ENCODE measurements at regions of chr21 and their contacts with region 1.

Region 1: DNA sequence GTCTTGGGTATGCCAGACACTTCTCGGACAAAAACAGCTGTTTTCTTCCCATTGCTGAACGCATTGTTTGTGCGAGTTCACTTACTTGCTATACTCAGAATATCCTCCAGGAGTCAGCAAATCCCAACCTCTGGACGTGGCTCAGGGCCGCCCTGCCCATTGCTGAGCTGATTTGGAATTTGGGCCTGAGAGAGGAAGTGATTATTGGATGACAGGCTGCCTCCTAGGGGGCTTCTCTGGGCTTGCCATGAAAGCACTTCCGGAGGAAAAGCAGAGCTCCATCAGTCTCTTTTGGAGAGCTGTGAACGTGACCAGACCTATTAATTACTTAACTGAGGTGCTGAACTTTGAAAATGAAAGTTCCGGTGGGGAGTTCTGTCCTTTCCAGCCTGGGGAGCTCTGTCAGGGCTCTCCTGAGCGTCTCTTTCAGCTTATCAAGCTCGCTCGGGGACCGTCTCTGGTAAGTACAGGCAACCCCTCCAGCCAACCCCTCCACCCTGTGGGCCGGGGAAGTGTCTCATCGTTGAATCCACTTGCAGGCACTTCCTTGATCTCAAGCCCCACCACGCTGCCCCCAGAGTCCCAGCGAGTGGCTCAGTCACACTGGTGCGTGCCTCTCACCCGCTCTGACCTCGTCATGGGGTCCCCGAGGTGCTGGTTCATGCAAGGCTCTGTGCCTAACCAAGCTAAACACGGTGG is 76.9 kb downstream of the CLIC6 start:
- DNase-seq: peak; percentile 71 to 83
- H3K4me3 ChIP-seq: no peak overlapping the region
- H3K4me3 Mint-ChIP-seq: no peak overlapping the region
- H3K27ac Mint-ChIP-seq: no peak overlapping the region
- H3K4me1 ChIP-seq: no peaks in the 10 kb centered on the region
- H3K4me1 Mint-ChIP-seq: no peaks in the 10 kb centered on the region
- H3K27me3 ChIP-seq: no peaks in the 10 kb centered on the region
- H3K27me3 Mint-ChIP-seq: no peaks in the 10 kb centered on the region
- CTCF ChIP-seq: peak; percentile 78 to 86

Region 2: DNA sequence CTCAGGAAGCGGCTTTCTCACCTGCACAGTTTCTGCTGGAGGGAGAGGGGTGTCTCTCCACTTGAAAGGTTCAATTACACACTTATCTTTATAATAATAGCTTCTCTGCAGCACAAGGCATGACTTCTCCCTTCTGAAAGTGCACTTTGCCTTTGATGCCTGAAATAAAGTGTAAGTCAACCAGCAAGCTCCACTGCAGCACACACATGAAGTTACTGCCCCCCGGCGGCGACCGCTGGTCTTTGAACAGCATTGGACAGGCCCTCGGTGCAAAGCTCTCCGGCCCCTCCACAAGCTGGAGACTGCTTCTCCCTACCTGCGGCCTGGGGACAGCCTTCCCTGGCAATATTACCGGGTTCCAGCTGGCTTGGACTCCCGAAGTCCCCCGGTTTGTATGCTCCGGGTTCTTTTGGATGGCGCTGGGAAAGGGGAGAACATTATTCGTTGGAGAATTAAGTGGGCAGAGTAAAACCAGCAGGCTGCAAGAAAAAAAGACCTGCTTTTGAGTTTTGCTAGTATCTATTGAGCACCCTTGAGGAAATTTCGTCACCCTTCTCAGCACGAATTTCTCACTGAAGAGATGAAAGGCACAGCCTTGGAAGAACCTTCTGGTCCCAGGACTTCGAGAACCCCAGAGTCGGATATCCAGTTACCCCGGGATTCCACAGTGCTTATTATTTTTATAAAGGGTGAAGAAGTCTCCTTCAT is 142.6 kb before region 1 on chr21:
- CTCF ChIA-PET with region 1: no interaction called
- POLR2A ChIA-PET with region 1: no interaction called
- intact Hi-C with region 1: no loop called
- DNase-seq: peak; percentile 77 to 83
- H3K4me3 ChIP-seq: no peak overlapping the region
- H3K4me3 Mint-ChIP-seq: no peak overlapping the region
- H3K27ac Mint-ChIP-seq: no peak overlapping the region
- H3K4me1 ChIP-seq: no peaks in the 10 kb centered on the region
- H3K4me1 Mint-ChIP-seq: peaks cover 4% of the 10 kb centered on the region
- H3K27me3 ChIP-seq: no peaks in the 10 kb centered on the region; the same call in 1 of the 2 replicates
- H3K27me3 Mint-ChIP-seq: no peaks in the 10 kb centered on the region
- CTCF ChIP-seq: peak; percentile 76 to 84

Region 3: GRCh38 chr21:34888569-34889319 is 143.0 kb after region 1 on chr21:
- CTCF ChIA-PET with region 1: interaction called, 47 read pairs
- POLR2A ChIA-PET with region 1: interaction called, 8 read pairs
- intact Hi-C with region 1: loop called (anchors 1 kb)
- DNase-seq: peak; percentile 93 to 94
- H3K4me3 ChIP-seq: peak overlapping the region; percentile 78
- H3K4me3 Mint-ChIP-seq: peak overlapping the region; percentile 93
- H3K27ac Mint-ChIP-seq: peak overlapping the region; percentile 83
- H3K4me1 ChIP-seq: no peaks in the 10 kb centered on the region
- H3K4me1 Mint-ChIP-seq: no peaks in the 10 kb centered on the region
- H3K27me3 ChIP-seq: peaks cover 2% of the 10 kb centered on the region; the same call in 1 of the 2 replicates
- H3K27me3 Mint-ChIP-seq: no peaks in the 10 kb centered on the region
- CTCF ChIP-seq: no peak

Region 4: GRCh38 chr21:35508139-35508888 is 762.6 kb after region 1 on chr21:
- CTCF ChIA-PET with region 1: interaction called, 8 read pairs
- POLR2A ChIA-PET with region 1: no interaction called
- intact Hi-C with region 1: loop called (anchors 1 kb)
- DNase-seq: peak; percentile 69 to 71
- H3K4me3 ChIP-seq: no peak overlapping the region
- H3K4me3 Mint-ChIP-seq: no peak overlapping the region
- H3K27ac Mint-ChIP-seq: no peak overlapping the region
- H3K4me1 ChIP-seq: peaks cover 16% of the 10 kb centered on the region
- H3K4me1 Mint-ChIP-seq: peaks cover 14% of the 10 kb centered on the region
- H3K27me3 ChIP-seq: no peaks in the 10 kb centered on the region
- H3K27me3 Mint-ChIP-seq: peaks cover 2% of the 10 kb centered on the region
- CTCF ChIP-seq: peak; percentile 32 to 48

Region 5: DNA sequence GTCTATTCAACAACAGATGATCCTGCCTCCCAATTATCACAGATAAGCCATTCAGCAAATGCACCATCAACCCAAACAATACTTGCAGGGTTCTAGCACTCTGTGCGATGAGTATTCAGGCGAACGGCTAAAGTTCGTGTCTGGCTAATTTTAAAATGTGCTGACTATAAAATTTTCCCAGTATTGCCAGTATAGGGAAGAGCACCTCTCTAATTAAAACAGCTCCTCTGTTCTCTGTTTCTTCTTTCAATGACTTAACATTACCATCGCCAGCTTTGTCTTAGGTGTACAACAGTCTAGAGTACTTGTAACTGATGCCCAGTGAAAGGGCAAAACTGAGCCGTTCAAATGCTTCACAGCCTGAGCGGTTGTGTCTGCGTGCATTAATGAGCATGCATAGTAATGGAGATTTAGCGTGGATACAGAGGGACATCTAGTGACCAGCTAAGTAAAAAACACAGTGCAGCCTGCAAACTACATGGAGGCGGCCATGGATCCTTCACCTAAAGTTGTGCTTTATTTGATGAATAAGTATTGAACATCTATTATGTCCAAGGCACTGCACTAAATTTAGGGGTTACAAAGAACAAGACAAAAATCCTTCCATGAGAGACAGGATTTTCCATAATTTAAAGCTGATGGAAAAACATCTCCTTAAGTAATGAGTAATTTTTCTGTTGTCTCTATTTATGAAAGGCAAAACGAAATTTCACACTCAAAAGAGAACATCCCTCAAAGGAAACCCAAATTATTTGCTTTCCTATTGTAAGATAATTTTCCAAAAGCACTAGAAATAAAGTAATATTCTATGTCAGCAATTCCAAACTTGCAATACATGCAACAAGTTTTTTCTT is 1194.6 kb after region 1 on chr21:
- CTCF ChIA-PET with region 1: interaction called, 5 read pairs
- POLR2A ChIA-PET with region 1: no interaction called
- intact Hi-C with region 1: loop called (anchors 1 kb)
- DNase-seq: peak; percentile 43 to 60
- H3K4me3 ChIP-seq: no peak overlapping the region
- H3K4me3 Mint-ChIP-seq: peak overlapping the region; percentile 40
- H3K27ac Mint-ChIP-seq: no peak overlapping the region
- H3K4me1 ChIP-seq: peaks cover 4% of the 10 kb centered on the region; the same call in 1 of the 2 replicates
- H3K4me1 Mint-ChIP-seq: no peaks in the 10 kb centered on the region
- H3K27me3 ChIP-seq: no peaks in the 10 kb centered on the region
- H3K27me3 Mint-ChIP-seq: no peaks in the 10 kb centered on the region
- CTCF ChIP-seq: peak; percentile 36 to 66